ENCODE measurements at regions of chr2 and their contacts with region 1.

Region 1: DNA sequence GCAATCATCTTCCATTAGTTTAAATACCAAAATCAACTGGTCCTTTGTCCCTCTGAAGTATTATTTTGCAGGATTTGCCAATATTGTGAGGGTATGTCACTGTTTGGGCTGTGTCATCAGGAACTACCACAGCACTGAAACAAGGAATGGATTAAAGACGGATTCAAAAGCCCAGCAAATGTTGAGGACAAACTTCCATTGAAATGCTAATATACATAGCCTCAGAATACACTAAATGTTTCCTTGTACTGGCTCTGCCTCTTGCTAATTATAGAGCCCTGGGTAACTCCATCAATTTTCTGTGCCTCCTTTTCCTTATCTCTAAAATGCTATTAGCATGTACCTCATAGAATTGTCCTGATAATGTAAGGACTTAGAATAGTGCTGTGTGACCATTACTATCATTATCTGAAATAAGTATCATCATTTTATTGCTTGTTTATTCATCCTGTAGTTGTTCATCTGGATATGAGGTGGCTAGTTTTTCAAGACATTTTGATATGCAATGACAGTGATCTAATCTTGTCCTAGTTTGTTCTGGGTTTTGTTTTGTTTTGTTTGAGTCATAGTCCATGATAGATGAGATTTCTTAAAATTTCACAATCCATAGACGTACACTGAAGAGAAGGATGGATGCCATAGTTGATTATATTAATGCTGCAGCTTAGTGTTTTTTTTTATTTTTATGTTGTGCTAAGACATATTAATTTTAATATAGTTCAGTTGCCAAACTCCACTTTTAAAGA is 333.4 kb upstream of the KCNH7 start:
- DNase-seq: peak in 1 of 2 experiments; percentile 51
- ATAC-seq: peak; percentile 78 to 92
- H3K4me3 ChIP-seq: no peak overlapping the region
- H3K27ac ChIP-seq: peak overlapping the region; percentile 34 to 54; a peak in 4 of 6 replicates
- H3K4me1 ChIP-seq: peaks cover 32% of the 10 kb centered on the region
- CTCF ChIP-seq: no peak
- EP300 ChIP-seq: no peak
- POLR2A ChIP-seq: no peak
- RAD21 ChIP-seq: no peak

Region 2: GRCh38 chr2:163155279-163155883 is 16.6 kb before region 1 on chr2:
- CTCF ChIA-PET with region 1: interaction called, 30 read pairs
- POLR2A ChIA-PET with region 1: no interaction called
- DNase-seq: peak; percentile 21 to 44
- ATAC-seq: peak; percentile 66 to 83; a peak in 5 of 6 replicates
- H3K4me3 ChIP-seq: no peak overlapping the region
- H3K27ac ChIP-seq: no peak overlapping the region
- H3K4me1 ChIP-seq: peaks cover 6% of the 10 kb centered on the region; the same call in 1 of the 3 replicates
- CTCF ChIP-seq: peak; percentile 77
- EP300 ChIP-seq: no peak
- POLR2A ChIP-seq: no peak
- RAD21 ChIP-seq: peak; percentile 80

Region 3: GRCh38 chr2:164479460-164479859 is 1307.5 kb after region 1 on chr2:
- CTCF ChIA-PET with region 1: interaction called, 16 read pairs
- POLR2A ChIA-PET with region 1: no interaction called
- DNase-seq: peak in 1 of 2 experiments; percentile 64
- ATAC-seq: peak; percentile 56 to 72; a peak in 5 of 6 replicates
- H3K4me3 ChIP-seq: no peak overlapping the region
- H3K27ac ChIP-seq: no peak overlapping the region
- H3K4me1 ChIP-seq: no peaks in the 10 kb centered on the region; the same call in 2 of the 3 replicates
- CTCF ChIP-seq: peak; percentile 85
- EP300 ChIP-seq: no peak
- POLR2A ChIP-seq: no peak
- RAD21 ChIP-seq: peak; percentile 88 to 89